IMR-90 (cell line): ENCODE measurements at regions of chr4 and their contacts with region 1.

Region 1: DNA sequence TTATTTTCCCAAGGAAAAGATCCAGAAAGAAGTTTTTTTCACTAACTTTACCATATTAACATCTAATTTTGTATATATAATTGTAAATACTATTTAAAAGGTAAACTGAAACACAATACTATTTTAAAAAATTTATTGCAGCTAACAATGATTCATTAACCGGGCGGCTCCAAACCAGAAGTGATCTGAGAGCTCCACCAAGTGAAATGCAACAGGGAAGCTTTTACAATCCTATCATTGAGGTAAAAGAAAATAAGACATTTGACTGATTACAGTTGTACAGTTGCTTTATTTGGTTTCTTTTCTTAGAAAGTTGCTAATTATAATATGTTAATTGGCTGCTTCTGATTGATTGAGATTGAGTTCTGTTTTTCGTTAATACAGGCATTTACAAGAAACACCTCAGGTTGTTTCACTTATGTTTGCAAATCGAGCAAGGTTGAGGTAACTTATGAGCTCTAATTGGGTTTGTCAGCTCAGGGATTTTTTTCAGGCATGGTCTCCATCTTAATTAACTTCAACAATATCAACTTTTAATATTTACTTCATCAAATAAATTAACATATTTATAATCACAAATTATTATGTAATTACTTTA is 220.2 kb upstream of the UGT8 start:
- DNase-seq: peak; percentile 65
- ATAC-seq: peak; percentile 77
- H3K4me3 ChIP-seq: no peak overlapping the region
- H3K27ac ChIP-seq: no peak overlapping the region
- H3K4me1 ChIP-seq: peaks cover 4% of the 10 kb centered on the region; the same call in 1 of the 2 replicates
- H3K27me3 ChIP-seq: no peaks in the 10 kb centered on the region
- CTCF ChIP-seq: peak; percentile 86
- POLR2A ChIP-seq: no peak
- RAD21 ChIP-seq: peak; percentile 91

Region 2: DNA sequence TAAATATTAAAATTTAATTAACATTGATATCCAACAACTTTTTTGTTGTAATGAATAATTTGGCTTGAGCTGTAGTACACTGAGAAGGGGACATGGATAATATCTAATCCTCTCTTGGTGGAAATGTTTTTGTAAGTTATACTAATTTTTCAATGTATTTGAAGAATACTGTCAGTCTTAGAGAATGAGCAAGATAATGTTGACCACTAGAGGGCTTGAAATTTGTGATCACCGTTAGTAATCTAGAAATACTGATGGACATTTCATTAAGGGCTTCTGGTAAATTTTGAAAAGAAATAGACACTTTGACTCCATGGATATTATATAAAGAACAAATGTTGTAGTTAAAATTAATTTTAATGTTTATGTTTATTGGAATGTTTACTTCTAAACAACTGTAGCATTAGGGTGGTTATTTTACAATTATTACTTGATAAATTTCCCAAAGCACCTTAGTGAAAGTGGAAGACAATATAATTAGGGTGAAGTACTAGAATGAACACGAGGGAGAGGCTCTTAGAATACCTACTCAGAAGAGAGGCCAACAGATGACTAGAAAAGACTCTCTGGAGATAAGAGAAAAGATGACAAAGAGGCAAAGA is 596.9 kb before region 1 on chr4:
- CTCF ChIA-PET with region 1: no interaction called
- POLR2A ChIA-PET with region 1: no interaction called
- dilution Hi-C with region 1: no loop called
- in situ Hi-C with region 1: loop called (anchors 10 kb)
- intact Hi-C with region 1: loop called (anchors 2 kb)
- DNase-seq: peak; percentile 55
- ATAC-seq: no peak
- H3K4me3 ChIP-seq: no peak overlapping the region
- H3K27ac ChIP-seq: no peak overlapping the region
- H3K4me1 ChIP-seq: peaks cover 4% of the 10 kb centered on the region
- H3K27me3 ChIP-seq: no peaks in the 10 kb centered on the region
- CTCF ChIP-seq: peak; percentile 66
- POLR2A ChIP-seq: no peak
- RAD21 ChIP-seq: peak; percentile 59

Region 3: GRCh38 chr4:113901994-113902787 is 476.2 kb before region 1 on chr4:
- CTCF ChIA-PET with region 1: no interaction called
- POLR2A ChIA-PET with region 1: no interaction called
- dilution Hi-C with region 1: no loop called
- in situ Hi-C with region 1: no loop called
- intact Hi-C with region 1: loop called (anchors 10 kb)
- DNase-seq: no peak
- ATAC-seq: no peak
- H3K4me3 ChIP-seq: no peak overlapping the region
- H3K27ac ChIP-seq: no peak overlapping the region
- H3K4me1 ChIP-seq: peaks cover 3% of the 10 kb centered on the region
- H3K27me3 ChIP-seq: no peaks in the 10 kb centered on the region
- CTCF ChIP-seq: no peak
- POLR2A ChIP-seq: no peak
- RAD21 ChIP-seq: no peak

Region 4: GRCh38 chr4:113952452-113953029 is 425.9 kb before region 1 on chr4:
- CTCF ChIA-PET with region 1: no interaction called
- POLR2A ChIA-PET with region 1: no interaction called
- dilution Hi-C with region 1: no loop called
- in situ Hi-C with region 1: no loop called
- intact Hi-C with region 1: loop called (anchors 1 kb)
- DNase-seq: peak; percentile 62
- ATAC-seq: peak; percentile 63
- H3K4me3 ChIP-seq: no peak overlapping the region
- H3K27ac ChIP-seq: peak overlapping the region; percentile 31; the same call in 1 of the 2 replicates
- H3K4me1 ChIP-seq: peaks cover 9% of the 10 kb centered on the region
- H3K27me3 ChIP-seq: no peaks in the 10 kb centered on the region
- CTCF ChIP-seq: peak; percentile 71
- POLR2A ChIP-seq: no peak
- RAD21 ChIP-seq: peak; percentile 77

Region 5: DNA sequence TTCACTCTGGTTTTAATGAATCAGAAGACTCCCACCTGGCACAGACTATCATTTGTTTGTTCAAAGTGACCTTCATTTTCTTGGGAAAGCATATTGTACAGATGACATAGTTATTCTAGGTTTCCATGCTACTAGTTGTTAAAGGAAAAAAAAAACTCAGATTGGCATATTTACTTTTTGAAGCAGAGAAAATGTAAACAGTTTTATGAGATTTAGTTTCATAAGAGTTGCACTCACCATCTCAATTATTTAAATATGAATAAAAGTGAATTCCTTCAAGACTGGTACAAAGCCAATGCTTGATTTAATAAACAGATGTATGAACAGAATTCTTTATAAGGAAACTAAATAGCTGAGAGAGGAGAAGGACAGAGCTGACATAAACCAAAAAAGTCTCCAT is 60.1 kb before region 1 on chr4:
- CTCF ChIA-PET with region 1: no interaction called
- POLR2A ChIA-PET with region 1: no interaction called
- dilution Hi-C with region 1: no loop called
- in situ Hi-C with region 1: no loop called
- intact Hi-C with region 1: no loop called
- DNase-seq: peak; percentile 80
- ATAC-seq: peak; percentile 77
- H3K4me3 ChIP-seq: no peak overlapping the region
- H3K27ac ChIP-seq: peak overlapping the region; percentile 83; the same call in 1 of the 2 replicates
- H3K4me1 ChIP-seq: peaks cover 7% of the 10 kb centered on the region
- H3K27me3 ChIP-seq: no peaks in the 10 kb centered on the region
- CTCF ChIP-seq: no peak
- POLR2A ChIP-seq: no peak
- RAD21 ChIP-seq: no peak

Region 6: GRCh38 chr4:114361249-114361648 is 17.2 kb before region 1 on chr4:
- CTCF ChIA-PET with region 1: no interaction called
- POLR2A ChIA-PET with region 1: no interaction called
- dilution Hi-C with region 1: no loop called
- in situ Hi-C with region 1: no loop called
- intact Hi-C with region 1: no loop called
- DNase-seq: no peak
- ATAC-seq: no peak
- H3K4me3 ChIP-seq: no peak overlapping the region
- H3K27ac ChIP-seq: no peak overlapping the region
- H3K4me1 ChIP-seq: peaks cover 6% of the 10 kb centered on the region
- H3K27me3 ChIP-seq: no peaks in the 10 kb centered on the region
- CTCF ChIP-seq: no peak
- POLR2A ChIP-seq: no peak
- RAD21 ChIP-seq: no peak